T-cell (primary cell): ENCODE measurements at regions of chr13 and their contacts with region 1.

Region 1: GRCh38 chr13:48222358-48223301 is 10.4 kb upstream of the ITM2B start:
- DNase-seq: no peak
- ATAC-seq: peak in 1 of 4 experiments; percentile 54
- H3K4me3 ChIP-seq: no peak overlapping the region
- H3K4me3 Mint-ChIP-seq: peak overlapping the region; percentile 53 to 69 (median 66)
- H3K27ac ChIP-seq: peak overlapping the region; percentile 86
- H3K27ac Mint-ChIP-seq: peak overlapping the region; percentile 98 to 99
- H3K4me1 ChIP-seq: peaks cover 35 to 45% of the 10 kb centered on the region in 2 experiments
- H3K4me1 Mint-ChIP-seq: peaks cover 64 to 78% (median 65%) of the 10 kb centered on the region in 3 donors
- H3K27me3 ChIP-seq: no peaks in the 10 kb centered on the region
- H3K27me3 Mint-ChIP-seq: no peaks in the 10 kb centered on the region

Region 2: GRCh38 chr13:47555235-47555634 is 667.4 kb before region 1 on chr13:
- CTCF ChIA-PET with region 1: no interaction called
- POLR2A ChIA-PET with region 1: no interaction called
- DNase-seq: no peak
- ATAC-seq: no peak
- H3K4me3 ChIP-seq: no peak overlapping the region
- H3K4me3 Mint-ChIP-seq: no peak overlapping the region
- H3K27ac ChIP-seq: no peak overlapping the region
- H3K27ac Mint-ChIP-seq: no peak overlapping the region
- H3K4me1 ChIP-seq: no peaks in the 10 kb centered on the region
- H3K4me1 Mint-ChIP-seq: no peaks in the 10 kb centered on the region
- H3K27me3 ChIP-seq: no peaks in the 10 kb centered on the region
- H3K27me3 Mint-ChIP-seq: peaks cover 0 to 5% of the 10 kb centered on the region in 2 donors

Region 3: DNA sequence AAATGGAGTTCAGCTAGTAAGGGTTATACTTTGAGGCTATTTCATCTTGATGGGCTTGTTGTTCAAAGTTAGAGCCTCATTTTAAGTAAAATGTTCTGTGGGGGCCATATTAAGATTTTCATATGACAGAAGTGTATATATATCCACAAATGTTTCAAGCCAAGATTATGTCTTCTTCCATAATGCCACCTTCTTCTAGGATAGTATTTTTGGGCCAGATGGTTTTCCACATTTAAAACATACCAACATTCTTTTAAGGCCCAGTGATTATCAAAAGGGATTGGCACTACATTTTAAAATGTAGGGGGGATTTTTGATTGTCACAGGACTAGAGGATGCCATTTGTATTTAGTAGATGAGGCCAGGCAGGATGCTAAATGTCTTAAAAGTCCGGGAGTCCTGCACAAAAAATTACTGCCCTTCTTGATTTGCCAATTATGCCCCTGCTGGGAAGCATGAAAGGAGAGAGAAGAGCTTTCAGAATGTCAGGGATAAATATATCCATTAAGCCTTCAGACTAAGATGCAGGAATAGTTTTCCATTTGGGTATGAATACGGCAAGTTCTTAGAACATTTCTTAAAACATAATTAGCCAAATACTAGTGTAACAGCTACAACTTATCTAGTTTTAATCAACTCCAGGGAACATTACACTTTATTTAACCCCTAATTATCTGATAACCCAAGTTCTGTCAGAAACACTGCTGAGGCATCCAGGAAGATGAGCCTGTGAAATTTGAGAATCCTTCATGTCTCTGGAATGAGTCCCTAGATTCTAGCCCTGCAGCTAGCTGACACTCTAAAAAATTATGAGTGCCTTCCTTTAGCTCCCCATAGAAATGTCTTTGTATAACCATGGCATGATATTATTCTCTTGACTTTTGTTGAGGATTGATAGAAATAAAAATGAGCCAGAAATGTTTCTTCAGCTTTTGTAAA is 44.3 kb after region 1 on chr13:
- CTCF ChIA-PET with region 1: no interaction called
- POLR2A ChIA-PET with region 1: interaction called in 1 of 2 experiments, 12 read pairs
- DNase-seq: no peak
- ATAC-seq: no peak
- H3K4me3 ChIP-seq: no peak overlapping the region
- H3K4me3 Mint-ChIP-seq: no peak overlapping the region
- H3K27ac ChIP-seq: no peak overlapping the region
- H3K27ac Mint-ChIP-seq: peak overlapping the region; percentile 35 to 70
- H3K4me1 ChIP-seq: peaks cover 11 to 29% of the 10 kb centered on the region in 2 experiments
- H3K4me1 Mint-ChIP-seq: peaks cover 51 to 54% (median 53%) of the 10 kb centered on the region in 3 donors
- H3K27me3 ChIP-seq: no peaks in the 10 kb centered on the region
- H3K27me3 Mint-ChIP-seq: no peaks in the 10 kb centered on the region